ENCODE measurements at regions of chr4 and their contacts with region 1.

Region 1: GRCh38 chr4:74228691-74229640 is 71.0 kb downstream of the MTHFD2L start:
- DNase-seq: peak; percentile 31
- CTCF ChIP-seq: peak; percentile 73

Region 2: DNA sequence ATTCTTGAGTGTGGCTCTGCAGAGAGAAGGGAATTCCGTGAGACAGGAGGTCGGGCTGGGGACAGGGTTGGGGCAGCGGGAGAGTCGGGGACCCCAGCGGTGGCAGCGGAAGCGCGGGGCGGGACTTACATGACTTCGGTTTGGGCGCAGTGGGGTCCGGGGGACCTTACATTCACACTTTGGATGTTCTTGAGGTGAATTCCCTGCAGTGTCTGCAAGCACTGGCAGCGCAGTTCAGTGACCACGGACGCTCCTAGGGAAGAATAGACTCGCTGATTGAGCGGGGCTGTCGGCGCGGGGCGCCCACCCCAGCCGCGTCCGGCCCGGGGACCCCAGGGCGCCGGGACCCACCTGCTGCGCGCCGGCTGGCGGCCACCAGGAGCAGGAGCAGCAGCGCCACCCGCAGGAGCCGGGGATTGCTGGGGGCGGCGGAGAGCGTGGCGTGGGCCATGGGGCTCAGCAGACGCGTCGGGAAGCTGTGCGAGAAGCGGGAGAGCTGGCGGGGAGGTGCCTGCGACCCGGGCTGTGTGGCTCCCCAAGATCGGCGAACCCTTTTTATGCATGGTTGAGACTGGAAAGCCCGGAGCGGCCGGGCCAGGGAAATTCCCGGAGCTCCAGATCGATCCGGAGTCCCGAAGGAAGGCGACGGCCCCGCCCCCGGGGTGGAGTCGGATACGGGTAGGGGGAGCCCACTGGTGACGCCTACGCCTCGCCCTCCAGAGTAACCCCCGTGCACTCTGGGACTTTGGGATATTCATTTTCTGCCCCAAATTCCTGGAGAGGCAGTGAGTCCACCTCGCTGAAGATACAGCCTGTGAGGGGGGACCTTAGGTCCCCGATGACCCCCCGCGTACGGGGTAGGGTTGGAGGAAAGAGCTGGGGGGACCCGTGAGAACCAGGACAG is 190.6 kb before region 1 on chr4 and contains the start of gene CXCL3:
- CTCF ChIA-PET with region 1: no interaction called
- POLR2A ChIA-PET with region 1: no interaction called
- DNase-seq: peak; percentile 18
- CTCF ChIP-seq: no peak

Region 3: DNA sequence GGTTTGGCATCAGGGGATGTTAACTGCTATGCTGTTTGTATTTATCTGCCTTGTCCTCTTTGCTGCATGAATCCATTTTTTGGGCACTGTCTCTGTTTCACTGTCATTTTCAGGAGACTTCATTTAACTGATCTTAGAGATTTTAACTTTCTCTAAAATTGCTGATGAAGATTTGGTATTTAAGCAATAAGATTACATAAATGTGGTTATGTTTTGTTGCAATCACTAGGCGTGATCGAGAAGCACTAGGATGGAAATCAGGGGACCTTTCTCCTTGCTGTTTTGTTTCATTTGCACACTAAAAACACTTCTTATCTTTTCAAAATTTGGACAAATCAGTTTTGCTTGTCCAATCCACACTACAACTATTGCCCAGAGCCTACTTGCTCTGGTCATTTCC is 145.4 kb before region 1 on chr4:
- CTCF ChIA-PET with region 1: no interaction called
- POLR2A ChIA-PET with region 1: no interaction called
- DNase-seq: no peak
- CTCF ChIP-seq: no peak

Region 4: GRCh38 chr4:74109116-74109869 is 119.7 kb before region 1 on chr4:
- CTCF ChIA-PET with region 1: no interaction called
- POLR2A ChIA-PET with region 1: no interaction called
- DNase-seq: no peak
- CTCF ChIP-seq: no peak

Region 5: GRCh38 chr4:74206088-74206825 is 22.7 kb before region 1 on chr4:
- CTCF ChIA-PET with region 1: interaction called, 44 read pairs
- POLR2A ChIA-PET with region 1: no interaction called
- DNase-seq: peak; percentile 30
- CTCF ChIP-seq: no peak

Region 6: GRCh38 chr4:74252933-74253332 is 24.0 kb after region 1 on chr4:
- CTCF ChIA-PET with region 1: interaction called, 15 read pairs
- POLR2A ChIA-PET with region 1: no interaction called
- DNase-seq: no peak
- CTCF ChIP-seq: no peak

Region 7: DNA sequence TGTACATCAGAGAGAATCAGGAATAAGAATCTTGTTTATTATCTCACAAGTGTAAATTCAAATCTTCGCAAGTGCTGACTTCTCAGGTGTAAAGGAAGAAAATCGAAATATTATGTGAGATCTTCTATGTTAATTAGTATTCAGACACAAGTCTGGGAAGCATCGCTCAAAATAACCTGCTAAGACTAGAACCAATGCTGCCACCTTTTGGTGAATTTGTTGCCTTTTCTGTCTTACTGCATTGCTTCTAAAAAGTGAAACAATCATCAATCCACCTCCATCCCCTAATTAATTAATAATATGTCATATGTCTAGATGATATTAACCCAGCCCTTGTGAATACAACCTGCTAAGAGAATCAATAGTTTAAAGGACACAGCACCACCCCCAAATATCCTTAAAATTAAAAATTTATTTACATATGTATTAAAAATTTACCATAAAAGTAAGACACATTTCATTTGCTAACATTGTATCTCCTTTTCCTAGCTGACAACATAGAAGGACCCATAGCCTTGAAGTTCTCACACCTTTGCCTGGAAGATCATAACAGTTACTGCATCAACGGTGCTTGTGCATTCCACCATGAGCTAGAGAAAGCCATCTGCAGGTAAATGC is 82.8 kb after region 1 on chr4:
- CTCF ChIA-PET with region 1: interaction called, 12 read pairs
- POLR2A ChIA-PET with region 1: no interaction called
- DNase-seq: peak; percentile 19
- CTCF ChIP-seq: peak; percentile 73

Region 8: DNA sequence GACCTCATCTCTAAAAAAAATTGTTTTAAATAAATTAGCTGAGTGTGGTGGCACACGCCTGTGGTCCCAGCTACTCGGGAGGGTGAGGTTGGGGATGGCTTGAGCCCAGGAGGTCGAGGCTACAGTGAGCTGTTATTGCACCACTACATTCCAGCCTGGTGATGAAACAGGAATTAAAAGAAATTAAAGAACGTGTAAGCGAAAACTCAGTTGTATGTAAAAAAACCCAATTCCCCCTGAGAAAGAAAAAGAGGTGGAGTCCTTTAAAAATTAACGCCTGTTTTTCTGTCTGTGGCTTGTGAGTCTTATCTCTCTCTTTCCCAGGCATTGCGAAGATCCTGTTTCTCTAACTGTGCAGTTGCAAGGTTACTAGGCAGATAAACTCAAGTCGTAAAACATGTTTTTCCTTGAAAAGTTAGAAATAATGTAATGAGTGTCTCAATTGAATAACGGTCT is 101.4 kb after region 1 on chr4:
- CTCF ChIA-PET with region 1: no interaction called
- POLR2A ChIA-PET with region 1: no interaction called
- DNase-seq: no peak
- CTCF ChIP-seq: no peak

Measured in GM10248 (cell line).